ENCODE measurements at regions of chr1 and their contacts with region 1.

Region 1: DNA sequence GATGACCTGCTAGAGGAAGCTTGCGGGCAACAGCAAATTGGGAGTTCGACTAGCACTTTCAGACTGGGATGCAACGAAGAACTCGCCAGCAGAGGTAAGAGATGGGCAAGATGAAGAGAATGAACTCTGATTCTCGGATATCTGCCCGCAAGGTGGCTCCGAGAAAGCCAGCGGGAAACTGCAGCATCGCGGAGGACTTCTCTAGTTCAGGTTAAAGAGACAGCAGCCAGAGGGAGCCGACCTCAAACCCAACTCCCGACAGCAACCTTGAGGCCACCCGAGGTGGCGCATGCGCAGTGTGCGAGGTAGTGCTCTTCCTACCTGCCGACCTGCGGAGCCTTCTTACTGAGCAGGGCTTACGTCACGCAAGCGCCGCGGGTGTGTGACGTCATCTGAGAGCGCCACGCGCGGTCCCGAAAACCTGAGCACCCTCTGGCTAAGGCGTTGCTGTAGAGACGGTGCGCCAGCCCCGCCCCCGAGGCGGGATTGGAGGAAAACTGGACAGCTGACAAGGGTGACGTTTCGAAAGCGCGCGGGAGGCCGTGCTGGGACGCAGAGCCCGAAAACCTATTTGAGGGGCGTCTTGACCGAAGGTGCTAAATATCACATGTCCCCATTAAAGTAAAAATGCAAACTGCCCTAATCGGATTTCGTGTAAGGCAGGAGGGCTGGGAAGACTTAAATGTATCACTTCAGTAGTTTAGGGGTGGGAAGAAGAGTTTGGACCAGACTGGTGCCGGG is 110.5 kb upstream of the SLC25A33 start:
- DNase-seq: peak; percentile 98
- ATAC-seq: peak; percentile 93
- H3K4me3 ChIP-seq: peak overlapping the region; percentile 46 to 69 (median 60)
- H3K27ac ChIP-seq: peak overlapping the region; percentile 58
- H3K4me1 ChIP-seq: peaks cover 60% of the 10 kb centered on the region
- H3K27me3 ChIP-seq: no peaks in the 10 kb centered on the region
- CTCF ChIP-seq: peak; percentile 77
- EP300 ChIP-seq: no peak; a peak in 1 of 4 replicates
- POLR2A ChIP-seq: peak; percentile 41 to 79
- RAD21 ChIP-seq: peak; percentile 85

Region 2: DNA sequence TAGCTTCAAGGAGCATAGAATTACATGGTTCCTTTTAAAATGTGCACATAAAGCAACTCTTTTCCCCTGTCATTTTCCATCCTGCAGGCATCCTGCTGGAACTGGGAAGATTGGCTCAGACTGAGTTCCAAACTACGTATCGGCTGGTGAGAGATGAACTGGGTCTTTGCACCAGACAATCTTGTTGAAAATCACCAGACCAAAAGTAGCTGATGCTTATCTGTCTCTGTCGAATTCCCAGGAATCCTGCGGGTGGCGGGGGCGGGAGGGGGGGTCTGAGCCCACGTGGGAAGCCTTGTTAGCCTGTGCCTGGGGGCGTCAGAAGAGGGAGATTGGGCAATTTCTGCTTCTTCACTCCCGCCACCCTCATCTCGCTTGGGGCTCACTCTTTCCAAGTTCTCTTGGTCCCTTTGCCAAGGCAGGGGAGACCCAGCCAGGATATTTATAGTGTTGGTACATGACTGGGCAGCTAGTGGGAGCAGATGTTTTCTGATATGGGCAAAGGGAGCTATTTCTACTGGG is 20.4 kb after region 1 on chr1:
- CTCF ChIA-PET with region 1: no interaction called
- POLR2A ChIA-PET with region 1: no interaction called
- in situ Hi-C with region 1: no loop called
- intact Hi-C with region 1: loop called (anchors 2 kb)
- DNase-seq: peak; percentile 21
- ATAC-seq: no peak; the same call in 2 of the 3 replicates
- H3K4me3 ChIP-seq: peak overlapping the region in 1 of 3 experiments; percentile 40; a peak in 1 of 6 replicates
- H3K27ac ChIP-seq: no peak overlapping the region
- H3K4me1 ChIP-seq: peaks cover 80% of the 10 kb centered on the region
- H3K27me3 ChIP-seq: no peaks in the 10 kb centered on the region; a peak in 1 of 5 replicates
- CTCF ChIP-seq: no peak
- EP300 ChIP-seq: no peak
- POLR2A ChIP-seq: no peak
- RAD21 ChIP-seq: no peak

Measured in HepG2 (cell line).